KBM-7 (cell line): ENCODE measurements at regions of chr22 and their contacts with region 1.

Region 1: GRCh38 chr22:24938741-24939341 is 7.7 kb downstream of the LHFPL7 start:
- DNase-seq: peak; percentile 57

Region 2: GRCh38 chr22:25048659-25049647 is 110.1 kb after region 1 on chr22:
- in situ Hi-C with region 1: loop called (anchors 25 kb)
- DNase-seq: peak; percentile 59